ENCODE measurements at regions of chr17 and their contacts with region 1.

Region 1: GRCh38 chr17:50478391-50479381 is at the start of gene RSAD1:
- DNase-seq: peak; percentile 98 to 99
- H3K4me3 ChIP-seq: peak within 1 kb of the TSS; percentile 70
- H3K4me3 Mint-ChIP-seq: peak within 1 kb of the TSS; percentile 78
- H3K27ac Mint-ChIP-seq: peak within 1 kb of the TSS; percentile 90
- H3K4me1 ChIP-seq: peaks cover 22% of the 10 kb centered on the region
- H3K4me1 Mint-ChIP-seq: peaks cover 50% of the 10 kb centered on the region
- H3K27me3 ChIP-seq: no peaks in the 10 kb centered on the region
- H3K27me3 Mint-ChIP-seq: no peaks in the 10 kb centered on the region
- CTCF ChIP-seq: peak; percentile 80 to 99
- total RNA-seq, gene RSAD1: 85.3 and 93.9 TPM in 2 replicates

Region 2: GRCh38 chr17:50269477-50270434 is 208.9 kb before region 1 on chr17:
- CTCF ChIA-PET with region 1: no interaction called
- POLR2A ChIA-PET with region 1: no interaction called
- intact Hi-C with region 1: no loop called
- DNase-seq: peak; percentile 80 to 86
- H3K4me3 ChIP-seq: no peak overlapping the region
- H3K4me3 Mint-ChIP-seq: no peak overlapping the region
- H3K27ac Mint-ChIP-seq: no peak overlapping the region
- H3K4me1 ChIP-seq: peaks cover 22% of the 10 kb centered on the region
- H3K4me1 Mint-ChIP-seq: peaks cover 14% of the 10 kb centered on the region
- H3K27me3 ChIP-seq: no peaks in the 10 kb centered on the region
- H3K27me3 Mint-ChIP-seq: no peaks in the 10 kb centered on the region
- CTCF ChIP-seq: peak; percentile 92 to 98

Region 3: GRCh38 chr17:50361561-50362480 is 116.9 kb before region 1 on chr17:
- CTCF ChIA-PET with region 1: interaction called, 65 read pairs
- POLR2A ChIA-PET with region 1: interaction called, 3 read pairs
- intact Hi-C with region 1: loop called (anchors 1 kb)
- DNase-seq: peak; percentile 80 to 81
- H3K4me3 ChIP-seq: no peak overlapping the region
- H3K4me3 Mint-ChIP-seq: no peak overlapping the region
- H3K27ac Mint-ChIP-seq: peak overlapping the region; percentile 23
- H3K4me1 ChIP-seq: no peaks in the 10 kb centered on the region; the same call in 1 of the 2 replicates
- H3K4me1 Mint-ChIP-seq: peaks cover 10% of the 10 kb centered on the region
- H3K27me3 ChIP-seq: no peaks in the 10 kb centered on the region
- H3K27me3 Mint-ChIP-seq: no peaks in the 10 kb centered on the region
- CTCF ChIP-seq: peak; percentile 97 to 98

Region 4: DNA sequence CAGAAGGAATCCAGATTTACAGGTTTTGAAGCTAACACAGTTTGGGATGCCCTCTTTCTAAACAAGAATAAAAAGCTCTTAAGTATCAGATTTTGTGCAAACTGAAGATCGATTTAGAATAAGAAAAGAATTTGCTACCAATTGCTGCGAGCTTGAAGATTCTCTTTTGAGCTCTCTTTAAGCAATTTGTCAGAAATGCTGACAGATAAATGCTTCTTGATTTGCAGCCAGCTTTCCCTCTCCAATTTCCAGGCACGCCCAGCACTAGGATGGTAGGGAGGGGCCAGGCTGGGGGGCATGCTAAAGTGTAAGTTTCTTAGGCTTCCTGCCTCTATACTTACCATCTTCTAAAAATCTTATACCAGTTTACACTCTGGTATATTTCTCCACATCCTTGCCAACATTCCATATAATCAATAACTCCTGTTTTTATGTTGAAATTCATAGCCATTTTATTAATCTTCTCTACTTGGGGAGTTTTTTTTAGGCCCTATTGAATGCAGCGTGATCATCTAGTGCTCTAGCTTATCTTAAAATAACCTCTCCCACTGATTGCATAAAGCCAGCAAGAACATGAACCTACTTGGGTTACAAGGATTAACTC is 35.2 kb before region 1 on chr17:
- CTCF ChIA-PET with region 1: interaction called, 15 read pairs
- POLR2A ChIA-PET with region 1: interaction called, 4 read pairs
- intact Hi-C with region 1: loop called (anchors 1 kb)
- DNase-seq: peak; percentile 71 to 77
- H3K4me3 ChIP-seq: no peak overlapping the region
- H3K4me3 Mint-ChIP-seq: peak overlapping the region; percentile 43
- H3K27ac Mint-ChIP-seq: peak overlapping the region; percentile 74
- H3K4me1 ChIP-seq: peaks cover 66% of the 10 kb centered on the region
- H3K4me1 Mint-ChIP-seq: peaks cover 69% of the 10 kb centered on the region
- H3K27me3 ChIP-seq: no peaks in the 10 kb centered on the region
- H3K27me3 Mint-ChIP-seq: no peaks in the 10 kb centered on the region
- CTCF ChIP-seq: no peak

Region 5: GRCh38 chr17:50534222-50534978 is 55.7 kb after region 1 on chr17:
- CTCF ChIA-PET with region 1: interaction called, 7 read pairs
- POLR2A ChIA-PET with region 1: interaction called, 5 read pairs
- intact Hi-C with region 1: loop called (anchors 2 kb)
- DNase-seq: peak; percentile 68 to 72
- H3K4me3 ChIP-seq: no peak overlapping the region
- H3K4me3 Mint-ChIP-seq: peak overlapping the region; percentile 87
- H3K27ac Mint-ChIP-seq: peak overlapping the region; percentile 16
- H3K4me1 ChIP-seq: peaks cover 47% of the 10 kb centered on the region
- H3K4me1 Mint-ChIP-seq: peaks cover 46% of the 10 kb centered on the region
- H3K27me3 ChIP-seq: no peaks in the 10 kb centered on the region
- H3K27me3 Mint-ChIP-seq: no peaks in the 10 kb centered on the region
- CTCF ChIP-seq: peak; percentile 37 to 72

Region 6: GRCh38 chr17:50626037-50626574 is 147.4 kb after region 1 on chr17:
- CTCF ChIA-PET with region 1: interaction called, 12 read pairs
- POLR2A ChIA-PET with region 1: interaction called, 4 read pairs
- intact Hi-C with region 1: loop called (anchors 1 kb)
- DNase-seq: peak; percentile 92 to 94
- H3K4me3 ChIP-seq: no peak overlapping the region
- H3K4me3 Mint-ChIP-seq: no peak overlapping the region
- H3K27ac Mint-ChIP-seq: peak overlapping the region; percentile 0
- H3K4me1 ChIP-seq: peaks cover 37% of the 10 kb centered on the region
- H3K4me1 Mint-ChIP-seq: peaks cover 29% of the 10 kb centered on the region
- H3K27me3 ChIP-seq: no peaks in the 10 kb centered on the region
- H3K27me3 Mint-ChIP-seq: no peaks in the 10 kb centered on the region
- CTCF ChIP-seq: peak; percentile 99

Region 7: GRCh38 chr17:50956750-50957523 is 478.3 kb after region 1 on chr17:
- CTCF ChIA-PET with region 1: no interaction called
- POLR2A ChIA-PET with region 1: no interaction called
- intact Hi-C with region 1: loop called (anchors 5 kb)
- DNase-seq: peak; percentile 86 to 87
- H3K4me3 ChIP-seq: no peak overlapping the region
- H3K4me3 Mint-ChIP-seq: no peak overlapping the region
- H3K27ac Mint-ChIP-seq: no peak overlapping the region
- H3K4me1 ChIP-seq: peaks cover 9% of the 10 kb centered on the region
- H3K4me1 Mint-ChIP-seq: peaks cover 13% of the 10 kb centered on the region
- H3K27me3 ChIP-seq: no peaks in the 10 kb centered on the region
- H3K27me3 Mint-ChIP-seq: no peaks in the 10 kb centered on the region
- CTCF ChIP-seq: peak; percentile 96 to 98